BJ (cell line): ENCODE measurements at regions of chr4 and their contacts with region 1.

Region 1: DNA sequence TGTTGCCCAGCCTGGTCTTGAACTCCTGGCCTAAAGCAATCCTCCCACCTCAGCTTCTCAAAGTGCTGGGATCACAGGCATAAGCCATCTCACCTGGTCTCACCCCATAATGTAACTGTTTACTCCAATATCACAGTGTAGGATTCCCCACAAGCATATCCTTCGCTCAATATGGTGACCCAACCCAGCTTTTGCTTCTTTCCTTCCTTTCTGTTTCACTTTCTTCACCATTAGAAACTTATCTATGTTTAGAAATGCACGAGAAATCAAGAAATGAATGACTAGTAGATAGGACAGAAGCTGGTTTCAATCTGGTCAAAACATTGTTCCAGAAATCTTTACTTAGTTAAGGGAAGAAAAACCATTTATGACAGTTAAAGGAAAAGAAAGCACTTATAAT is 18.9 kb downstream of the TSPAN5 start:
- DNase-seq: no peak
- H3K4me3 ChIP-seq: no peak overlapping the region
- H3K27me3 ChIP-seq: no peaks in the 10 kb centered on the region
- CTCF ChIP-seq: no peak

Region 2: DNA sequence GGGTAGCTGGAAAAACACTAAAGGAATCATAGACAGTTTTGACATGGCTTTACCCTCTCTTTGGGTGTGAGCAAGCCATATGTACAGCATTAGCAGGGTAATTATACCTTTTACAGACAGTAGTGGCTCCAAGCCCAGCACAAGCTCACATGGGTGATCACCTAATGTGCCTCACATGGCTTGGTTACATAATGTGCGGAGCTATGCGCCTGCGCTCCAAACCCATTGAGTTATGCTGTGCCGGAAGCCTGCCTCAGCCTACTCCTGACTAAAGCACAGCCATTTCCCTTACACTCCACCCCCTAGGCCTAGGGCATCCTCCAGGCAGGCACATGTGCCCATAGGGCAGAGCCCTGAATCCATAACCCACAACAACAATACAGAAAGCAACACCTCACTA is 25.4 kb after region 1 on chr4:
- CTCF ChIA-PET with region 1: no interaction called
- POLR2A ChIA-PET with region 1: no interaction called
- DNase-seq: no peak
- H3K4me3 ChIP-seq: no peak overlapping the region
- H3K27me3 ChIP-seq: no peaks in the 10 kb centered on the region
- CTCF ChIP-seq: no peak

Region 3: DNA sequence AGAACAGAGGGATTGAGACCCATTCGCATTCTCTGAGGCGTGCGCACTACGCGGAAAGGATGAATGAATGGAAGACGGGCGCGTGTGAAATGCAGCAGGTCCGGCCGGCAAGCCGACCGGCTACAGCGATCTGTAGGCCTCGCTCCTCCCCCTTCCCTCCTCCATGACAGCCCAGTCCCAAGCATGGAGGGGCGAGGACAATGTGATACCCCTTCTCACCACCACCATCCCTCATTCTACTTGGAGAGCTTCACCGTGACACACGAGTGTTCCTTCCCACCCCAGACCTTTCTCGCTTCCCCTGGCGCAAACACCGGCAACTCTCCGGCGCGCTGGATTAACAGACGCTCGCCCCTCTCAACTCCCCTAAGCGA is 288.6 kb after region 1 on chr4:
- CTCF ChIA-PET with region 1: interaction called, 3 read pairs
- POLR2A ChIA-PET with region 1: interaction called, 11 read pairs
- DNase-seq: no peak
- H3K4me3 ChIP-seq: peak overlapping the region; percentile 81
- H3K27me3 ChIP-seq: no peaks in the 10 kb centered on the region
- CTCF ChIP-seq: no peak